Thyroid gland (tissue), 4 donors: ENCODE measurements at regions of chr17 and their contacts with region 1.

Region 1: DNA sequence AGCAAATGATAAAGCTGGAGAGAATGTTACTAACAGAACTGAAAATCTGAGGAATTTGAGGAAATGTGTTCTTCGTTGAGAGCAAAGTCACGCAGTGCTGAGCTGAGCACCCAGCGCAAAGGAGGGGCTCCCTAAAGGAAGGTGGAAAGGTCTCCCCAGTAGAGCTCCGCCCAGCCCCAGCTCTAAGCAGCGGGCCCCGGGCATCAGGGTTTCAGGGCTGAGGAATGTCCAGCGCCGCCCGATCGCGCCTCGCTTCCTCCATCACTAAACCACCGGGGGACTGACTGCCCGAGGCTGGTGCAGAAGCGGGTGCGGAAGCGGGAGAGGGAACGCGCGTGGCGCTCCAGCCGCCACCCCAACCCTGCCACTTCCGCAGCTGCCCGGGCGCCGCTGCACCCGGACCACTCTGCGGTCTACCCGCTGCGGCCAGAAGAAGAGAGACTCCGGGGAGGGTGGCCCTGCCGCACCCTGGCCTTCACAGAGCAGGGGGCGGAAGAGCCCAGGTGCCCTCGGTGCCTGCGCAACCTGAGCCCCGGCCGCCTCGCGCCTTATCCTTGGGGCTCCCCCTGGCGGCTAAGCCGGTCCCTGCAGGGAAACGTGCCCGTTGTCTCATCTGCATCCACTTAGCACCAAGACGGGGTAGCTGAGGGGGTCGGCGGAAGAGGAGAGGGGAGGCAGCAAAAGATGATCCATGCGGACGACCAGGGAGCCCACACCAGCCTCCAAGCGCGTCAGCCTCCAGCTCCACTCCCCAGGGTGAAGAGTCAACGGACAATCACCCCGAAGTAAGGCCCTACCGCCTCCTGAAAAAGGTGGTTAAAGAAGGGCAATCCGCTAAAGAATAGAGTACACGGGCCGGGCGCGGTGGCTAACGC is 12.4 kb upstream of the GUCY2D start:
- DNase-seq: peak; percentile 79 to 86
- H3K4me3 ChIP-seq: peak overlapping the region; percentile 17 to 35 (median 34)
- H3K27ac ChIP-seq: no peak overlapping the region
- H3K4me1 ChIP-seq: no peaks in the 10 kb centered on the region
- H3K27me3 ChIP-seq: no peaks in the 10 kb centered on the region
- CTCF ChIP-seq: peak; percentile 73 to 99 (median 90)
- POLR2A ChIP-seq: no peak

Region 2: DNA sequence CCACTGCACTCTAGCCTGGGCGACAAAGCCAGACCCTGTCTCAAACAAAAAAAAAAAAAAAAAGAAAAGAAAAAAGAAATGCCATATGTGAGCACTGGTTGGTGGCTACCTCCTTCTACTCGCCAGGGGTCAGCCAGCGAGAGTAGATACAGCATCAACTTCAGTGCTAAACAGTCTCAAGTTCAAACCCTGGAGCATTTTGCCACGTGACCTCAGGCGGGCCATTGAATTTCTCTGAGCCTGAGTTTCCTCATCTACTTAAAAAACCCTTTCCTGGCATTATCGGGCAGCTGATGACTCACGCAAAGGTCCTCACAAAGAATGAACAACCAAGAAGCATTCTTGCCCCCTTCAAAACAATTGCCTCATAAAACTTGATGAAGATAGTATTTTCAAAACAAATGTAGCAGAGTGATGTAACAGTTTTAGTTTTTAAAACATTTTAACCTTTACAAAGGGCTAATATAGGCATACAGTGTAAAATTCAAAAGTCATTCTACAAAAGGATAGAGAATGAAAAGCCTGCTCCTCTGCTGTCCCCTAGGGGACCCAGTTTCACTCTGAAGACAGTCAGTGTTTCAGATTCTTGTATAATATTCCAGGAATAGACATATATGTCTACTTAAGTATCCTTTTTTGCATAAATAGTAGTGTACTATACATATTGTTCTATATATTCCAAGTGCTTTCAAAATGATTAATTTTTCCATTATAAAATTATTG is 244.1 kb before region 1 on chr17:
- intact Hi-C with region 1: loop called (anchors 10 kb)
- DNase-seq: no peak
- H3K4me3 ChIP-seq: no peak overlapping the region
- H3K27ac ChIP-seq: no peak overlapping the region
- H3K4me1 ChIP-seq: no peaks in the 10 kb centered on the region
- H3K27me3 ChIP-seq: no peaks in the 10 kb centered on the region
- CTCF ChIP-seq: no peak
- POLR2A ChIP-seq: no peak

Region 3: DNA sequence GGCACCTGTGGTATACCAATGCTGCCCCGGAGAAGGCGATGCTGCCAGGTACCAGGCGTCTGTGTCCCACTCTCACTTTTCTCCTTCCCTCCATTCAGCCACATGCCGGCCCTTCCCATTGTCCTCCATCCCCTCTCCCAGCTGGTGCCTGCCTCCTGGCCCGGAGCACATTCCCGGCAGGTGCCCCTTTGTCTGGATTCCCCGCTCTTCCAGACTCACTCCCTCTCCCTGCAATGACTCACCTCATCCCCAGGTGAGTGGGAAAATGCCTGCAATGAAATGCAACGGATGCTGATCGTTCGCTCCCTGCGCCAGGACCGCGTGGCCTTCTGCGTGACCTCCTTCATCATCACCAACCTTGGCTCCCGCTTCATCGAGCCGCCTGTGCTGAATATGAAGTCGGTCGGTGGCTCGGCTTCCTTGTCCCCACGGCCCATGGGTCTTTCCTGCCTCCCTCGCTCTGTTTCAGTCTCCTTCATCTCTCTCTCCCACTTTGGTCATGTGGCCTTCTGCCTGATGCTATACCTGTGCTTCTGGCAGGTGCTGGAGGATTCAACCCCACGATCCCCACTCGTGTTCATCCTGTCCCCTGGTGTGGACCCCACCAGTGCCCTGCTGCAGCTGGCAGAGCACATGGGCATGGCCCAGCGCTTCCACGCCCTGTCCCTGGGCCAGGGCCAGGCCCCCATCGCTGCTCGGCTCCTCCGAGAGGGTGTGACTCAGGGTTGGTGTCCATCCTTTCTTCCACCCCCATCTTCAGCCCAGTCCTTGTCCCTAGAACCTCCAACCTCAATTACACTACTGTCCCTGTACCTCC is 166.2 kb before region 1 on chr17:
- intact Hi-C with region 1: loop called (anchors 5 kb)
- DNase-seq: no peak
- H3K4me3 ChIP-seq: no peak overlapping the region
- H3K27ac ChIP-seq: no peak overlapping the region
- H3K4me1 ChIP-seq: no peaks in the 10 kb centered on the region
- H3K27me3 ChIP-seq: no peaks in the 10 kb centered on the region
- CTCF ChIP-seq: no peak
- POLR2A ChIP-seq: no peak

Region 4: DNA sequence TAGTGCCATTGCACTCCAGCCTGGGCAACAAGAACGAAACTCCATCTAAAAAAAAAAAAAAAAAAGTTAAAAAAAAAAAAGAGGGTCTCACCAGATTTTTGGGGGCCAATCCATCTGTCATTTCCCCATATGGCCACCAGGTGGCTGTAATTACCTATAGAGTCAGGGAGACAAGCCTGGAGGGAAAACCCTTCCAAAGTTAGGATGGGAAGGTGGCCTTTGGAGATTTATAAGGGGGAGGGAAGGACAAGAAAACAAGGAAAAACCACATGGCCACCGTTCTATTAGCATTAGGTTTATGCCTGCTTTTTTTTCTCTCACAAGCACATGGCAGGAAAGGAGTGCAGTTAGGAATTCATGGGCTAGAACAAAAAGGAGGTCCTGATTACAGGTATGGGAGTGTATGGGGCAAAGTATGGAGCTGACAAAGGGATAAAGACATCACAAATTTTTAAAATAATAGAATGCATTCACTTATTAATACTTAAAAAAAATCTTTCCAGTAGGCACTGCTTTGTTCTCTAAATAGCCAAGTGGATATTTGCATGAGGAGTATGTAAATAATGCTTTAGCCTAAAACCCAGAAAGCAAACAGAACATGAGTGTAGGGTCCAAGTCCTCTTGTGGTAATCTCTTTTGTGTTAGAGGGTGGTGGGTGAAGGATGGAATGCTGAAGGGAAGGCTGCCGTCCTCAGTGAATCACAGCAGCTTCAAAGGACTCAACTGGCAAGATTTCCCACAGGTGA is 127.2 kb before region 1 on chr17:
- intact Hi-C with region 1: loop called (anchors 5 kb)
- DNase-seq: peak; percentile 49 to 52
- H3K4me3 ChIP-seq: no peak overlapping the region
- H3K27ac ChIP-seq: no peak overlapping the region
- H3K4me1 ChIP-seq: peaks cover 10 to 11% of the 10 kb centered on the region in 2 donors
- H3K27me3 ChIP-seq: no peaks in the 10 kb centered on the region
- CTCF ChIP-seq: peak; percentile 64 to 92 (median 77)
- POLR2A ChIP-seq: no peak

Region 5: DNA sequence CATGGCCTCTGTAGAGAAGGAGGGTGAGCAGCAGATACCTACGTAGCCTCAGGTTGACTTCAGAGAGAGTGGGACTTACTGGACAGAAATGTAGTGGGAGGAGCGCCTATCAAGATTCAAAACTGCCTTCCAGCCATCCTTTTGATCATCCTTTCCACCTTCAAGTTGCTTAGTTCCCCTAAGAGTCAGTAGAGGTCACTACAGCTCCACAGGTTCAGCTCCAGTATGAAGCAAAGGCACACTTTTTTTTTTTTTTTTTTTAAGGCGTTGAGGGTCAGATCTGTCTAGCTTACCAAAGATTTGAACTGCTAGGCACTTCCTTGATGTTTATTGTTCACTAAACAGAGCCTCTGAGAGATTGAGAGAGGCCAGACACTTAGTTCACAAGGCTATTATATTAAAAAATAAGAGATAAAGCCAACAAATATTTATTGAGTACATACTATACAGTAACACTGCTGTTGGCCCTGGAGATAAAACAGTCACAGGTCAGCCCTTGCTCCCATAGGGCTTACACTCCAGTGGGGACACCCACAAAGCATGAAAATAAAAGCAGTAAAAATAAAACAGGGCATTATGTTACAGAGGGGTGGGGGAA is 77.0 kb before region 1 on chr17:
- intact Hi-C with region 1: loop called (anchors 5 kb)
- DNase-seq: peak in 1 of 2 donors; percentile 34
- H3K4me3 ChIP-seq: no peak overlapping the region
- H3K27ac ChIP-seq: no peak overlapping the region
- H3K4me1 ChIP-seq: peaks cover 11 to 17% of the 10 kb centered on the region in 2 donors
- H3K27me3 ChIP-seq: no peaks in the 10 kb centered on the region
- CTCF ChIP-seq: peak; percentile 24 to 85 (median 62)
- POLR2A ChIP-seq: no peak

Region 6: DNA sequence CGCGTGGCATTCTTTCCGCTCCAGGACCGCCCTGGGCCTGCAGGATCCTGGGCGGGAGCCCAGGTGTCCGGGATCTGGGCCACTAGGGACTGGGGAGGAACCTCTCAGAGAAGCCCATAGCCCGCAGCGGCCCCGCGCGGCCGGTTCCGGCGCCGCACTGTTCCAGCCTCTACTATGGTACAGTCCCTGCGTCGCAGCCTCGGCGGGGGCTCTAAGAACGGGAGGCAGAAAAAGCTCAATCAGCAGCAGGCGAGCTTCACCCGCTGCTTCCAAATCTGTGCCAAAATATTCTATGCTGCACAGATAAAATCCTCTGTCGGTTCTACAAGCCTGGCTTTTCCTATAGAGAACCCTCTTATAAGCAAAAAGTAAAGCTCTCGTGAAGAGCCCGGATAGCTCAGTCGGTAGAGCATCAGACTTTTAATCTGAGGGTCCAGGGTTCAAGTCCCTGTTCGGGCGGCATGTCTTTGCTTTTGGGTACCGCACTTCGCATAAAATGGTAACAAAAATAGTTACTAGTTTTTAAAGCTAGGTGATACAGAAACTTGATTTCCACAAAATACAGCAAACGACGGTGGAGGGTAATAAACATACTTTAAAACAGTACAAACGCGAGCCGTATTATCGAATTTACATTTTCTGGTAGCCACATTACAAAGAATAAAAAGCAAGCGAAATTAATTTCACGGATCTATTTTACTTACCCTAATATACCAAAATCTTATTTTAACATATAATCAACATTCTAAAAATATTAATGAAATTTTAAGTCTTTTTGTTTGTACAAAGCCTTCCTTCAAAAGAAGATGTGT is 129.0 kb after region 1 on chr17:
- intact Hi-C with region 1: no loop called
- DNase-seq: peak; percentile 87 to 89
- H3K4me3 ChIP-seq: peak overlapping the region; percentile 7 to 30 (median 17)
- H3K27ac ChIP-seq: peak overlapping the region; percentile 65 to 83 (median 71)
- H3K4me1 ChIP-seq: peaks cover 44 to 46% of the 10 kb centered on the region in 2 donors
- H3K27me3 ChIP-seq: no peaks in the 10 kb centered on the region
- CTCF ChIP-seq: peak; percentile 68 to 86 (median 74)
- POLR2A ChIP-seq: no peak